H1 (cell line): ENCODE measurements at regions of chr11 and their contacts with region 1.

Region 1: DNA sequence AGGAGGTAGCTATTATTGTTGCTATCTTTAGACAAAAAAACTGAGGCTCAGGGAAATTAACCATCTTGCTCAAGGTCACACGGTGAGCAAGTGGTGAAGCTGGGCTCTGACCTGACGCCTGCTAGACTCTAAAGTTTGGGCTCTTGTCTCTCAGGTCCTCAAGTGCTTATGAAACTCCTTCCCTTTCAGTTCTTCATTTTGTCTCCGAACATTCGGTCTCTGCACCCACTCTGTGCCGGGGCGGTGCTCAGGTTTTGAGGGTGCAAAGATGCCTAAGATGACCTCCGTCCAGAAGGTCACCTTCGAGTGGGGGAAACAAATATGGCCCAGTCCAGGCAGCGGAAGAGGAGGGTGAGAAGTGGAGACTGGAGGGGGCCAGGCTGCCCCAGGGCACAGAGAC is 16.0 kb downstream of the OVOL1 start:
- DNase-seq: no peak
- H3K4me3 ChIP-seq: no peak overlapping the region
- H3K27ac ChIP-seq: no peak overlapping the region
- H3K4me1 ChIP-seq: peaks cover 0 to 14% (median under 1%) of the 10 kb centered on the region in 4 experiments; a peak in 2 of 7 replicates
- H3K27me3 ChIP-seq: no peaks in the 10 kb centered on the region; a peak in 1 of 7 replicates
- CTCF ChIP-seq: no peak
- EP300 ChIP-seq: no peak
- POLR2A ChIP-seq: no peak
- RAD21 ChIP-seq: no peak

Region 2: GRCh38 chr11:65791691-65792213 is 11.1 kb before region 1 on chr11:
- CTCF ChIA-PET with region 1: interaction called, 13 read pairs
- POLR2A ChIA-PET with region 1: interaction called, 8 read pairs
- DNase-seq: no peak
- H3K4me3 ChIP-seq: no peak overlapping the region
- H3K27ac ChIP-seq: no peak overlapping the region
- H3K4me1 ChIP-seq: peaks cover 14 to 25% (median 22%) of the 10 kb centered on the region in 4 experiments
- H3K27me3 ChIP-seq: peaks cover 5 to 22% (median 18%) of the 10 kb centered on the region in 4 experiments
- CTCF ChIP-seq: no peak
- EP300 ChIP-seq: no peak
- POLR2A ChIP-seq: no peak
- RAD21 ChIP-seq: no peak

Region 3: DNA sequence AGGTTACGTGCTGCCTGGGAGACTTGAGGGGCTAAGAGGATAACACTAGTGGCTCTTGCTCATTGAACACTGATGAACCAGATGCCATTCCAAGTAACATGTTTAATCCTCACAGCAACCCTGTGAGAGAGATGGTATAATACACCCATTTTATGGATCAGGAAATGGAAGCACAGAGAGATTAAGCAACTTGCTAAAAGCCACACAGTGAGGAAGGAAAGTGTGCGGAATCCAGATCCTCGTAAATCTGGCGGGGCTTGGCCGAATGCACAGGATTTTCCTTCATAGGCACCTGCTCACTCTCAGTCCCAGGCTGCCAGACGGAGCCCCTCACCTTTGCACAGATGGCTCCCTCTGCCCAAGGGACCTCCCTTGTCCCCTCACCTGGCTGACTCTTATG is 105.0 kb after region 1 on chr11:
- CTCF ChIA-PET with region 1: no interaction called
- POLR2A ChIA-PET with region 1: no interaction called
- DNase-seq: no peak
- H3K4me3 ChIP-seq: no peak overlapping the region
- H3K27ac ChIP-seq: no peak overlapping the region
- H3K4me1 ChIP-seq: peaks cover 0 to 6% (median 4%) of the 10 kb centered on the region in 4 experiments; a peak in 5 of 7 replicates
- H3K27me3 ChIP-seq: peaks cover 0 to 13% (median 5%) of the 10 kb centered on the region in 4 experiments; a peak in 5 of 7 replicates
- CTCF ChIP-seq: no peak
- EP300 ChIP-seq: no peak
- POLR2A ChIP-seq: no peak
- RAD21 ChIP-seq: no peak